Activated CD8-positive, alpha-beta memory T cell treated with anti-CD3 and anti-CD28 coated beads, Interleukin-2, amount 10 ng/mL, durations not matched to agents 7 days and 5 days (primary cell): ENCODE measurements at regions of chr5 and their contacts with region 1.

Region 1: DNA sequence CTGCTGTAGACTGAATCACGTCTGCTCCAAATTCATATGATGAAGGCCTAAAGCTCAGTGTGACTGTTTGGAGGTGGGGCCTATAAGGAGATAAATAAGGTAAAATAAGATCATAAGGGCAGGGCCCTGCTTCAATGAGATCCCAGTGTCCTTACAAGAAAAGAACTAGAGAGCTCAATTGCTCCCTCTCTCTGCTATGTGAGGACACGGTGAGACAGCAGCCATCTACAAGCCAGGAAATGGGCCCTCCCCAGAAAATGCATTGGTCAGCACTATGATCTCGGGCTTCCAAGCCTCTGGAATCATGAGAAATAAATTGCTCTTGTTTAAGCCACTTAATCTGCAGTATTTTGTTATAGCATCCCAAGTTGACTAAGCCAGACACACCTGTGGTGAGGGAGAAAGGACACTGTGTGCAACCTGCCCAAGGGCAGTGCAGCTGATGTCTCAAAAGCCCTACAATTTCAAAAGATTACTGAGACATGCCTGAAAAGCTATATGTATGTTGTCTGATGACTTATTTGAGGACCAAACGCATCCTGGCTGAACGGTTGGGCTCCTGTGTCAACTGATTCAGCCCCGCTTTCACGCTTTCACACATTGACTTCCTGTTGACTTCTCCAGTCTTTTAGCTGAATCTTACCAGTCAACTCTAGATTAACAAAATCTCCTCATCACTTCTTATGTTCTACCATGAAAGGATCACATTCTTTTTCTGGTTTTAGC is 13.2 kb downstream of the GZMK start:
- DNase-seq: peak; percentile 93
- ATAC-seq: peak; percentile 96
- H3K4me3 Mint-ChIP-seq: peak overlapping the region; percentile 14
- H3K27ac Mint-ChIP-seq: peak overlapping the region; percentile 97
- H3K4me1 Mint-ChIP-seq: peaks cover 55% of the 10 kb centered on the region
- H3K27me3 Mint-ChIP-seq: no peaks in the 10 kb centered on the region

Region 2: DNA sequence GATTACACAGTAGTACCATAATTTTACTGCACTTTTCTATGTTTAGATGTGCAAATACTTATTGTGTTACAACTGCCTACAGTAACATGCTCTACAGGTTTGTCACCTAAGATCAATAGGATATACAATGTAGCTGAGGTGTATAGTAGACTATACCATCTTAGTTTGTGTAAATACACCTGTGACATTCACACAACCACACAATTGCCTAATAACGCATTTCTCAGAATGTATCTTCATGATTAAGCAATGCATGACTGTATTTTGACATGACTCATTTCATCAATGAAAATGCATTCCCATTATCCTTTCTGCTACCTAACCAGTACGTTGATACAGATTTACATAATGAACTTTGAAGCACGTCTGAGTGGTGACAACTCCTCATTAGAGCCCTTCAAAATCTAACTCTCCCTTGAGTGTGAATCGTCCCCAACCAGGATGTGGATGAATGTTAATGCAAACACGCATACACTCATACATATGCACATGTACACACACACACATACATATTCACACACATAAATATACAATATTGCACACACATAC is 15.2 kb after region 1 on chr5:
- CTCF ChIA-PET with region 1: interaction called, 18 read pairs
- DNase-seq: no peak
- ATAC-seq: no peak
- H3K4me3 Mint-ChIP-seq: no peak overlapping the region
- H3K27ac Mint-ChIP-seq: no peak overlapping the region
- H3K4me1 Mint-ChIP-seq: peaks cover 32% of the 10 kb centered on the region
- H3K27me3 Mint-ChIP-seq: no peaks in the 10 kb centered on the region

Region 3: DNA sequence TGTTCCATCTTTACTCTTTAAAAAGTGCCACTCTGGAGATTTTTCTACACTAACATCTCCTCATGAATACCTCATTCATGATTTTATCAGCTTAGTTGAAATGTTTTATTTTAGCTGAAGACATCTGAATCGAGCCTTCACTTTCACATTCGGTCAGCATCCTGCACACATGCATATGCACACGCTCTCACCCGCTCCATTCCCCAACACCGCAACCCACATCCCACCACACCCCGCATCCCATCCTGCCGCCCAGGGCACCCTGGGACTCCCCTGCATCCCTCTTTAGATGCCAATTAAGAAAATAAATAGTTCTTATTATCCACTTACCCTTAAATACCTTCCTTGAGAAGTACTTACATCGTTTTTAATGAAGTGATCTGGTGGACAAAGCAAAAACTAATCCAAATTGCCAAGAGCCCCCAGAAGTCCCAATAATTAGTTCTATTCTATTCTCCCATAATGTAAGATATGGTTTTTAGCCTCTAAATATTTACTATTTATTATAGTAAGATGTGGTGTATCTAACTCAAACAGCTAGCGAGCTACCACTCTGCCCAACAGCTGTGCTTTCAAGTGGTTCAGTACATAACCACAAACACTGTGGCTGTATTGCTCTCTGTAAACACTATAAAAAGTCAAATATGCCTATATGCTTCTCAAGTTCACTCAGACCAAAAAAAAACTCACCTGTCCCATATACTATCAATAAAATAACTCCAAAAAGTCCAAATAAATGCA is 25.0 kb after region 1 on chr5:
- CTCF ChIA-PET with region 1: interaction called, 26 read pairs
- DNase-seq: peak; percentile 93
- ATAC-seq: peak; percentile 87
- H3K4me3 Mint-ChIP-seq: peak overlapping the region; percentile 64
- H3K27ac Mint-ChIP-seq: peak overlapping the region; percentile 92
- H3K4me1 Mint-ChIP-seq: peaks cover 74% of the 10 kb centered on the region
- H3K27me3 Mint-ChIP-seq: no peaks in the 10 kb centered on the region

Region 4: GRCh38 chr5:55072666-55073065 is 35.5 kb after region 1 on chr5:
- CTCF ChIA-PET with region 1: interaction called, 18 read pairs
- DNase-seq: no peak
- ATAC-seq: peak; percentile 89
- H3K4me3 Mint-ChIP-seq: peak overlapping the region; percentile 38
- H3K27ac Mint-ChIP-seq: peak overlapping the region; percentile 97
- H3K4me1 Mint-ChIP-seq: peaks cover 52% of the 10 kb centered on the region
- H3K27me3 Mint-ChIP-seq: no peaks in the 10 kb centered on the region

Region 5: DNA sequence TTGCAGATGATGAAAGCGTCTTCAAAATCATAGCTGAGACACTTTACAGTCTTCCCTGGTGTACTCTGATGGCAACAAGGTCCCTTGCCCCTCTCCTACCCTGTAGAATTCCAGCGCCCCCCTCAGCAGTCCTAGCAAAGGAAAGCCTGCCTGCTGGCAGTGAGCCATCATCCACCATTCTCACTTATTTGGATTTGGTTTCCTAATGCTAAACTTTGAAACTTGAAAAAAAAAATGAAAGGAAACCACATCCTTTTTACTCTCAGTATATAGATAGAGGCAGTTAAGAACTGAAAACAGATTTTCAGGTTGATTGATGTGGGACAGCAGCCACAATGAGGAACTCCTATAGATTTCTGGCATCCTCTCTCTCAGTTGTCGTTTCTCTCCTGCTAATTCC is 65.1 kb after region 1 on chr5 and contains the start of gene GZMA:
- CTCF ChIA-PET with region 1: interaction called, 30 read pairs
- DNase-seq: peak; percentile 68
- ATAC-seq: peak; percentile 62
- H3K4me3 Mint-ChIP-seq: peak within 1 kb of the TSS; percentile 91
- H3K27ac Mint-ChIP-seq: peak within 1 kb of the TSS; percentile 97
- H3K4me1 Mint-ChIP-seq: peaks cover 73% of the 10 kb centered on the region
- H3K27me3 Mint-ChIP-seq: no peaks in the 10 kb centered on the region
- total RNA-seq, gene GZMA: 927 to 1,065 TPM

Region 6: DNA sequence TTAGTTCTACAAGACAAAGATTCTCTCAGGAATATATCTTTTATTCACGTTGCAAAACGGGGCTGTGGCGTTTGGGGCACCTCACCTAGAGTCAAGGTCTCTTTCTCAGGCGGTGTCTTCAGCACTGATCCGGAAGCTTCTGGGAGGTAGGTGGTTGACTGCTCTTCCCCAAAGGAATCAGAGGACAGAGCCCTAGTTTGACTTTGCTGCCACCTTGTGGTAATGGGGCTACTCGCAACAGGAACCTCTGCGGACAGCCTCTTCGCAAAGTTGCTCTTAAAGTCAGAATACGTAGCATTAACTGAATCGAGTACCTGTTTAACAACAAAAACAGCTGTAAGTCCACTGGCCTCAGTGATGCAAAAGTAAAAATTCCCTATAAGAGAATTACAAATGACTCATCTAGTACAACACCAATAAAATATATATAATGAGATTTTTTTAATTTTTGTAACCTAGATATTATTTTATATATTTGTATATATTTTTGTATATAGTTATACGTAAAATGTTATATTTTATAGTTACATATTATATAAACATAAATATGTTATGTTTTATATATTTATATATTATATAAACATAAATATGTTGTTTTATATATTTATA is 109.4 kb after region 1 on chr5:
- CTCF ChIA-PET with region 1: interaction called, 14 read pairs
- DNase-seq: peak; percentile 92
- ATAC-seq: peak; percentile 91
- H3K4me3 Mint-ChIP-seq: peak overlapping the region; percentile 38
- H3K27ac Mint-ChIP-seq: peak overlapping the region; percentile 75
- H3K4me1 Mint-ChIP-seq: peaks cover 43% of the 10 kb centered on the region
- H3K27me3 Mint-ChIP-seq: peaks cover 9% of the 10 kb centered on the region

Region 7: GRCh38 chr5:55159763-55160492 is 122.7 kb after region 1 on chr5 and contains the start of gene GPX8:
- CTCF ChIA-PET with region 1: no interaction called
- DNase-seq: no peak
- ATAC-seq: peak; percentile 76
- H3K4me3 Mint-ChIP-seq: no peak within 1 kb of the TSS
- H3K27ac Mint-ChIP-seq: no peak within 1 kb of the TSS
- H3K4me1 Mint-ChIP-seq: peaks cover 4% of the 10 kb centered on the region
- H3K27me3 Mint-ChIP-seq: peaks cover 45% of the 10 kb centered on the region
- total RNA-seq, gene GPX8: not detected

Region 8: GRCh38 chr5:55480781-55481180 is 443.6 kb after region 1 on chr5:
- CTCF ChIA-PET with region 1: no interaction called
- DNase-seq: no peak
- ATAC-seq: no peak
- H3K4me3 Mint-ChIP-seq: no peak overlapping the region
- H3K27ac Mint-ChIP-seq: no peak overlapping the region
- H3K4me1 Mint-ChIP-seq: peaks cover 12% of the 10 kb centered on the region
- H3K27me3 Mint-ChIP-seq: no peaks in the 10 kb centered on the region

Region 9: DNA sequence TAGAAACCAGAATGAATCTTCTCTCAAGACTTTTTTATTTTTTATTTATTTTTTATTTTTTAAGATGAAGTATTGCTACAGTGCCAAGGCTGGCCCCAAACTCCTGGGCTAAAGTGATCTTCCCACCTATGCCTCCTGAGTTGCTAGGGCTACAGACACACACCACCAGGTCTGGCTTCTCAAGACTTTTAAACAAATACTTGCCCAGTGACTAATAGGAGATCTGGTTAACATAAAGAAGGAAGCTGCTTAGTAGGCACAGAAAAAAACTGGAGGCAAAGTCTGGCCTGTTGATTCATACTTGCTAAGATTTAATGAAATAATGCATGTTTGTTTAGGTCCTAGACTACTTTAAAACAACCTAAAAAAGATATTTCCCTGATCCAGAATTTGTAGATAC is 631.1 kb after region 1 on chr5:
- CTCF ChIA-PET with region 1: no interaction called
- DNase-seq: no peak
- ATAC-seq: no peak
- H3K4me3 Mint-ChIP-seq: no peak overlapping the region
- H3K27ac Mint-ChIP-seq: no peak overlapping the region
- H3K4me1 Mint-ChIP-seq: no peaks in the 10 kb centered on the region
- H3K27me3 Mint-ChIP-seq: no peaks in the 10 kb centered on the region